Aorta (tissue), 5 donors: ENCODE measurements at regions of chr17 and their contacts with region 1.

Region 1: GRCh38 chr17:78341559-78342448 is 18.1 kb downstream of the SOCS3 start:
- DNase-seq: peak; percentile 91 to 95
- ATAC-seq: peak; percentile 85
- H3K4me3 ChIP-seq: no peak overlapping the region
- H3K27ac ChIP-seq: peak overlapping the region; percentile 72 to 90
- H3K4me1 ChIP-seq: no peaks in the 10 kb centered on the region
- H3K27me3 ChIP-seq: no peaks in the 10 kb centered on the region

Region 2: GRCh38 chr17:78258323-78259191 is 83.2 kb before region 1 on chr17:
- intact Hi-C with region 1: no loop called
- DNase-seq: peak; percentile 81 to 82
- ATAC-seq: no peak
- H3K4me3 ChIP-seq: no peak overlapping the region
- H3K27ac ChIP-seq: no peak overlapping the region
- H3K4me1 ChIP-seq: no peaks in the 10 kb centered on the region
- H3K27me3 ChIP-seq: no peaks in the 10 kb centered on the region

Region 3: DNA sequence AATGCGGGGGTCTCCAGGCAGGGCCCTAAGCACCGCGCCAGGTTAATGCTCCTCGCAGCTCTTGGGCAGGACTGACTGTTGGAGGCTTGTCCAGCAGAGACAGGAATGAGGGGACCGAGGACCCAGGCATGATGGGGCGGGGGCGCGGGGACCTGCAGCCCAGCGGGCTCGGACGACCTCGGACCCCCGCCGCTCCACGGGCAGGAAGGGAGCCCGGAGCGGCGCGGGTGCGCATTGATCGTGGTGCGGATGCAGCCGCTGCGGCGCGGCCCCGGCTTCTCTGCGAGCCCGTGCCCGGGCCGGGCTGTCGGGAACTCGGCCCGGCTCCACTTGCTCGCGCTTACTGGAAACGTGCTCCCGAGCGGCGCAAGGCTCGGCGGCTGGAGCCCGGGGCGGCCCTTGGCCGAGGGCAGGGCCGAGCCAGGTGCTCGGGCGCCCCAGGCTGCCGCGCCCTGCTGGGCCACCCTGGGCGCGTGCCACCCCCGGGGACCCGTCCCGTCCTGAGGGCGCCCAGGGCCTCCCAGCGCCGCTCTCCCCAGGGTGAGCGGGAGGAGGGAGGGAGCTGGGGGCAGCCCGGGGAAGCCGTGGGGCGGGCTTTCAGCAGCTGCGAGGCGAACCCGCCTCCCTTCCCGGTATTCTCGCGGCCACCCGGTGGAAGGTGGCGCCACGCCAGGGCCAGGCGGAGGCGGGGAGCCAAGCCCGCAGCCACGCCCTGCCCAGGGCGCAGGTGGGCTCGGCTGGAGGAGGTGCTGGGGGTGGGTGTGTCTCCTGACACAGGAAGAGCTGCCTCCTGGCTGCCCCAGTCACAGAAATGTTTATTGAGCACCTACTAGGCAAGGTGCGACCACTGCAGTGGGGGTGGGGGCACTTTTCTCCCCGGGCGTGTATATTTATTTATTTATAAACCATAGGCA is 27.8 kb before region 1 on chr17:
- intact Hi-C with region 1: loop called in 1 of 2 experiments (anchors 1 kb)
- DNase-seq: peak; percentile 83 to 92
- ATAC-seq: peak; percentile 78
- H3K4me3 ChIP-seq: peak overlapping the region; percentile 42 to 59
- H3K27ac ChIP-seq: peak overlapping the region in 1 of 2 donors; percentile 29
- H3K4me1 ChIP-seq: no peaks in the 10 kb centered on the region
- H3K27me3 ChIP-seq: no peaks in the 10 kb centered on the region

Region 4: DNA sequence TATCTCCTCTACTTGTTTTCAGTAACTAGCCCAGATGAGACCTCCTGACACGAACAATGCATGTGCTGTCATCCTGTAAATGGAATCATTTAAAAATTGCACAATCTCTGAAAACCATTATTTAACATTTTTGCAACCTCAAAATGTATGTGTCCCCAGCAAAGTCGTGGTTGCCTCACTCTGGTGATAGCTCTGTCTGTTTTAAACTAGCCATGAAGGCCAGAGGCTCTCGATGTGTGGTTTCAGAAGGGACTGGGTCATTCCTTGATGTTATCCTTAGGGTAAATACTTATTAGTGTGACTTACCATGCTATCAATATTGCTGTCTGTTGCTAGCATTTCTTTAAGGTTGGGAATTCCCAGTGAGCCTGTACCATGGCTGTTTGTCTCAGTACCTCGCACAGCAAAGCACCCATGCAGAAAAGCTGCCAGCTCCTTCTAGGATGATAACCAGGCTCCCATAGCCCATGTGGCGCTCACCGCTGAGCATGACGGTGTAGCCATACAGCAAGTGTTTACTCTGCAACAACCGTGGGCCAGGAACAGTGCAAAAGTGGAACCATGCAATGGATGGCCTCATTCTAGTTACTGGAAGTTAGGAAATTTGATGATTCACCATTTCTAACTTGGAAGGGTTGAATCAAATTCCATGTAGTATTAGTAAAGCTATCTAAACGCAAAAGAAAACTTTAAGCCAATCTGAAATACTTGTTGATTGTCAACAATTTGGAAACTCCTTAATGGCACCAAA is 33.8 kb after region 1 on chr17:
- intact Hi-C with region 1: loop called in 1 of 2 experiments (anchors 2 kb)
- DNase-seq: peak; percentile 89
- ATAC-seq: peak; percentile 59
- H3K4me3 ChIP-seq: no peak overlapping the region
- H3K27ac ChIP-seq: peak overlapping the region in 1 of 2 donors; percentile 54
- H3K4me1 ChIP-seq: no peaks in the 10 kb centered on the region
- H3K27me3 ChIP-seq: no peaks in the 10 kb centered on the region

Region 5: DNA sequence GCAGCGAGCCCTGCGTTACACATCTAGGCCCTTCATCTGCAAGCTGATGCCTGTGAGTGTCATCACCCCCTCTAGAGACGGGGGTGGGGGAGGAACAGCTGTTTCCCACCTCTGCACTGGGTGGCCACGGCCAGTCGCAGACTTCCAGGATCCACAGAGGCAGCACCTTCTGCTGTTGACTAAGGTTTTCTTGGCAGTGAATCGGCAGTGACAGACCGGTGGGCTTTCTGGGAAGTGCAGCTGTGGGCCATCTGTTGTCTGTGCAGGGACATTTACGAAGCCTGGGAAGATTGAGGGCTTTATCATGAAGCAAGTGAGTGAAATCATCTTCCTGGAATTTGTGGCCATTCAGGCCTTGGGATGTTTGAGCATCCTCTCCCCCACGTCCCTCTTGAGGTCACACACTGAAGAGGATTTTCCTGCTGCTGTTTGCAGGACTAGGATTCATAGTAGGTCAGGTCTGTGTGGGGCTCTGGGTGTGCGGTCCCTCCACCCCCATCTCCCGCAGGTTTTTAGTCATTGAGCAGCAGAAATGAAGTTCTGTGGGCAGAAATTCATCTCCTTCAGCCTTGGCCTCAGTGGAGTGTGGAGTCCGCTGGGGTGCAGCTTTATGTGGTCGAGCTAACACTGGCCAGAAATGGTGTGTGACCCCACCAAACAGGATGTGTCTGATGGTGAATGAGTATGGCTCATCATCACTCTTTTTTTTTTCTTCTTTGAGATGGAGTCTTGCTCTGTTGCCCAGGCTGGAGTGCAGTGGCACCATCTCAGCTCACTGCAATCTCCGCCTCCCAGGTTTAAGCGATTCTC is 48.6 kb after region 1 on chr17:
- intact Hi-C with region 1: no loop called
- DNase-seq: no peak
- ATAC-seq: no peak
- H3K4me3 ChIP-seq: no peak overlapping the region
- H3K27ac ChIP-seq: no peak overlapping the region
- H3K4me1 ChIP-seq: peaks cover 0 to 3% of the 10 kb centered on the region in 2 donors
- H3K27me3 ChIP-seq: no peaks in the 10 kb centered on the region

Region 6: DNA sequence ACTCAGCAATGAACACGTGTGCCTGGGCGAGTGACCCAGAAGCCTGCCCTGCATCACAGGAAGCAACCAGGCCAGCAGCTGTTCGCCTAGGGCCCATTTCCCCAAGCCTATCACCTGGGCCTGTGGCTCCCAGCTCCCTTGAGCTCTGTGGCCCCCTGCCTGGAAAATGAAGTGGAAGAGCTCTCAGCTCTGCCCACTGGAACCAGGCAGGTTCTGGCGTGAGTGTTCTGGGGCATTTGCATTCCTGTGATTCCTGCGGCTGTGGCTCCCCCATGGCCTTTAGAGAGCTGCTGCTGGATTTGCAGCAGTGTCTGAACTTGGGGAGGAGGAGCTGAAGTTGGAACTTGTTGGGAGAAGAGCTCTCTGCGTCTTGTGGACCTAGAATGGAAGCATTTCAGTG is 59.4 kb after region 1 on chr17:
- intact Hi-C with region 1: no loop called
- DNase-seq: no peak
- ATAC-seq: no peak
- H3K4me3 ChIP-seq: no peak overlapping the region
- H3K27ac ChIP-seq: no peak overlapping the region
- H3K4me1 ChIP-seq: peaks cover 2 to 3% of the 10 kb centered on the region in 2 donors
- H3K27me3 ChIP-seq: no peaks in the 10 kb centered on the region